CD14-positive monocyte (primary cell): ENCODE measurements at regions of chrX and their contacts with region 1.

Region 1: GRCh38 chrX:69538321-69538876 is 34.3 kb downstream of the NALF2 start:
- DNase-seq: peak; percentile 13 to 46 (median 25)
- H3K4me3 ChIP-seq: peak overlapping the region in 1 of 3 experiments; percentile 35
- H3K4me3 Mint-ChIP-seq: peak overlapping the region; percentile 48 to 53
- H3K27ac ChIP-seq: no peak overlapping the region
- H3K27ac Mint-ChIP-seq: no peak overlapping the region
- H3K4me1 ChIP-seq: peaks cover 0 to 3% of the 10 kb centered on the region in 2 donors
- H3K4me1 Mint-ChIP-seq: peaks cover 16% of the 10 kb centered on the region
- H3K27me3 ChIP-seq: no peaks in the 10 kb centered on the region
- H3K27me3 Mint-ChIP-seq: peaks cover 9 to 19% (median 11%) of the 10 kb centered on the region in 3 donors
- CTCF ChIP-seq: peak; percentile 56

Region 2: DNA sequence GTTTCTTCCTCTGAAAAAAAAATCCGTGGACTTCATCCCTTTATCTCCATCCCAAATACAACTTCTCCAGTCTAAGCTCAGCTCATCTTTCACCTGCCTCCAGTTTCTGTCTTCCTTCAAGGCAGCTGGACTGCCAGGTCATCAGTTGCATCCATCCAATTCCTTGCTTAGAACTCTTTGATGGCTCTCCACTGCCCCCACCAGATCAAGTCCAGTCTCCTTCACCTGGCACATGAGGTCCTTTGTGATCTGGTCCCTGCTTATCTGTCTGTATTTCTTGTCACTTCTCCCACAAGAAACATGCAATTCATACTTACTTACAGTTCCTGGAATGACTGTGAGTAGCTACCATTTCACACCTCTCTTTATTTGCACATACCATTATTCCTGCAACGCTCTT is 557.7 kb after region 1 on chrX:
- intact Hi-C with region 1: loop called in 1 of 2 experiments (anchors 10 kb)
- DNase-seq: no peak
- H3K4me3 ChIP-seq: no peak overlapping the region
- H3K4me3 Mint-ChIP-seq: no peak overlapping the region
- H3K27ac ChIP-seq: no peak overlapping the region
- H3K27ac Mint-ChIP-seq: no peak overlapping the region
- H3K4me1 ChIP-seq: no peaks in the 10 kb centered on the region
- H3K4me1 Mint-ChIP-seq: no peaks in the 10 kb centered on the region
- H3K27me3 ChIP-seq: no peaks in the 10 kb centered on the region
- H3K27me3 Mint-ChIP-seq: peaks cover 3 to 8% (median 4%) of the 10 kb centered on the region in 3 donors
- CTCF ChIP-seq: no peak